PC-3 (cell line): ENCODE measurements at regions of chr7 and their contacts with region 1.

Region 1: DNA sequence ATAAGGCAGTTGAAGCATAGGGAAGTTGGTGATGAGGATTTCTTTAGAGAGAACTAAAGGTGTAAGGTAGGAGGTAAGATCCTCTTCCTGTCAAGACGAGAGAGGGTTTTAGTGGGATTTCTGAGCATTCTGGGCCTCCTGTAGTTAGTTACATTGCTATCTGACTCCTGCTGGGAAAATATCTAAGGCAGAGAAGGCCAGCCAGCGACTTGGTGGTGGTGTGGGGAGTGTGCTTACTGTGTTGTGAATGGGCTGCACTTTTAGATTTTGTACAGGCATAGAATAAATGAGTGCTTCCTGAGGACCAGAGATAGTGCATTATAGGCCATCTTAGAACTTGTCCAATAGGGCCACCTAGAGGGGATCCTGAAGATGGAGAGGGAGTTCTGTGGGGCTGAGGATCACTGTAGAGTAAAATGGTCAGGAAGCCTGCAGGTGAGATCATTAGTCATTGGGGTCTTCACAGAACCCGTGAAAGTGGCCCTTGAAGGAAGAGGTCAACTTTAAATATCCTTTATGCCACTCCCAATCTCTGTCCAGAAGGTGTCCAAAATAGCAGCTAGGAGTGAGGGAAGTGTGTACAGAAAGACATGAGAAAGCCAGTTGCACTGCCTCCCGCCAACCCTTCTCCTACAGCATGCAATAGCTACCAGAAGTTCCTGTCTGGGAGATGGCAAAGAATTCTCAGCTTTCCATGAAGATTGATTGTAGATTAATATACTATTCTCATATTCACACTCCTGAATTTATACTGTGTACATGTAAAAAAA is 266.6 kb downstream of the POLR1F start:
- DNase-seq: peak; percentile 64
- ATAC-seq: peak; percentile 100
- H3K4me3 ChIP-seq: no peak overlapping the region
- H3K27ac ChIP-seq: no peak overlapping the region
- H3K4me1 ChIP-seq: no peaks in the 10 kb centered on the region
- H3K27me3 ChIP-seq: no peaks in the 10 kb centered on the region
- CTCF ChIP-seq: peak; percentile 80

Region 2: DNA sequence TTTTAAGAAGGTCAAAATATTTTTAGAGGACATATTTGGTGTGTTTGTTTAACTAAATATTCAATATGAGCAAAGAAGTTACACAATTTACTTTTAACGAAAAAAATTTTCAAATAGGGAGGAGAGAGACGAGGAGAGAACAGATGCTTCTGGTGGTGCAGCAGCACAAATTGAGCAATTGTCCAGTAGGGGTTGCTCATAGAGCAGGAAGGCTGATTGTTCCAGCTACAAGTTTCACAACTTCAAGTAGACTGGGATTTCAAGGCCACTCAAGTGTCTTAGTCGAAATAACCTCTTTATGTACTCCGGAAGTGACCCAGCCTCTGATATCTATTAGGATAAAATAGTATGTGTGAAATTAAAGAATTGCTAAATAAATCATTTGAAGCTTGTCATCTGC is 748.8 kb before region 1 on chr7:
- CTCF ChIA-PET with region 1: no interaction called
- POLR2A ChIA-PET with region 1: no interaction called
- intact Hi-C with region 1: loop called (anchors 5 kb)
- DNase-seq: peak; percentile 71
- ATAC-seq: peak; percentile 87
- H3K4me3 ChIP-seq: no peak overlapping the region
- H3K27ac ChIP-seq: no peak overlapping the region
- H3K4me1 ChIP-seq: no peaks in the 10 kb centered on the region
- H3K27me3 ChIP-seq: no peaks in the 10 kb centered on the region
- CTCF ChIP-seq: peak; percentile 88

Region 3: GRCh38 chr7:19294619-19295018 is 147.6 kb before region 1 on chr7:
- CTCF ChIA-PET with region 1: no interaction called
- POLR2A ChIA-PET with region 1: no interaction called
- intact Hi-C with region 1: loop called (anchors 10 kb)
- DNase-seq: peak; percentile 87
- ATAC-seq: peak; percentile 91
- H3K4me3 ChIP-seq: no peak overlapping the region
- H3K27ac ChIP-seq: peak overlapping the region; percentile 10; the same call in 1 of the 2 replicates
- H3K4me1 ChIP-seq: peaks cover 12% of the 10 kb centered on the region
- H3K27me3 ChIP-seq: no peaks in the 10 kb centered on the region
- CTCF ChIP-seq: no peak

Region 4: DNA sequence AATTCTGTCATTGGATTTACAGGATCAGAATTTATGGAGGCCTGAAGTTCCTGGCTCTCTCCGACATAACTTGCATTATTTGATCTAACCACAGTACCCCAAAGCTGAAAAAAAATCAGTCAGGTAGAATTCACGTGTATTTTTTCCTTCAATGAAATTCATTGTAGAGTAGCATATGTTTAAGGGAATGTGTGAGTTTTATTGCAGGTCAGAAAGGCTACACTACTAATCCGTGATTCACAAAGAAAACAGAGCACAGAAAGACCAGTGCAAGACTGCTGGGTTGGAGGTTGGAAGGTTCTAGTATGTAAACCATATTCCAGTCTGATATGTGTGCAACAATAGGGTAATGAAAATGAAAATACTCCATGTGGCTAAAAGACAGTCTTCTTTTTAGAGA is 50.0 kb before region 1 on chr7:
- CTCF ChIA-PET with region 1: no interaction called
- POLR2A ChIA-PET with region 1: no interaction called
- intact Hi-C with region 1: loop called (anchors 2 kb)
- DNase-seq: peak; percentile 84
- ATAC-seq: peak; percentile 100
- H3K4me3 ChIP-seq: no peak overlapping the region
- H3K27ac ChIP-seq: peak overlapping the region; percentile 13; the same call in 1 of the 2 replicates
- H3K4me1 ChIP-seq: peaks cover 16% of the 10 kb centered on the region
- H3K27me3 ChIP-seq: no peaks in the 10 kb centered on the region
- CTCF ChIP-seq: no peak

Region 5: GRCh38 chr7:19621740-19622139 is 179.5 kb after region 1 on chr7:
- CTCF ChIA-PET with region 1: no interaction called
- POLR2A ChIA-PET with region 1: no interaction called
- intact Hi-C with region 1: loop called (anchors 5 kb)
- DNase-seq: peak; percentile 72
- ATAC-seq: peak; percentile 94
- H3K4me3 ChIP-seq: 0 out of 2 replicates have a peak overlapping the region, but pooled peaks have one; percentile 19
- H3K27ac ChIP-seq: no peak overlapping the region
- H3K4me1 ChIP-seq: 0 out of 2 replicates have a peak, but pooled peaks cover 4% of the 10 kb centered on the region
- H3K27me3 ChIP-seq: peaks cover 12% of the 10 kb centered on the region; the same call in 1 of the 2 replicates
- CTCF ChIP-seq: peak; percentile 66